ENCODE measurements at regions of chr2 and their contacts with region 1.

Region 1: DNA sequence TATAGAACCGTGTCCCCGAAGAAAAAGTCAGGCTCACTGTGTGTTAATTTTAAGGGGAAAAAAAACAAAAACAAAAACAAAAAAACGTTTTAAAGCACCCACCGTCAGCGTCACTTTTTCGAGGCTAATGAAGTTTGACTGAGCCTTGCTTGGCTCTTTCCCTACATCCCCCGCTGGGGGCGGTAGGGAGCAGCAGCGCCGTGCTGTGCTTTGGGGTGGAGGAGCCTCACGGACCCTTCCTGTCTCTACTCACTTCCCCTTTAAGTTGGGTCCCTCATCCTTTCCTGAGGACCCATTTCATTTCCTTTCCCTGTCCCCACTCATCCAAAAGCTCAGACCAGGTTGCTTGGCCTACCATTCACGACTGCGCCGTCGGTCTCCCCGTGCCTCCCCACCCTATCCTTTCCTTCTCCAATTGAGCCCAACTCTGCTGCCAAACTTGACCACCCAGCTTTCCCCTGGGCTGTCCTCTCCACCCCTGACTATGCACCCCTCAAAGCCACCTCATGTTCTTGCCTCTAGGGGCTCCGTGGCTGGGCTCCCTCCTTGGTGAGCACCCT is 82.7 kb upstream of the RPL31 start:
- DNase-seq: peak in 1 of 2 experiments; percentile 86
- H3K4me3 ChIP-seq: no peak overlapping the region
- H3K27ac ChIP-seq: no peak overlapping the region
- H3K4me1 ChIP-seq: no peaks in the 10 kb centered on the region; a peak in 1 of 7 replicates
- H3K27me3 ChIP-seq: no peaks in the 10 kb centered on the region
- CTCF ChIP-seq: peak; percentile 64 to 93 (median 90)
- EP300 ChIP-seq: no peak
- POLR2A ChIP-seq: no peak
- RAD21 ChIP-seq: peak; percentile 54 to 69

Region 2: DNA sequence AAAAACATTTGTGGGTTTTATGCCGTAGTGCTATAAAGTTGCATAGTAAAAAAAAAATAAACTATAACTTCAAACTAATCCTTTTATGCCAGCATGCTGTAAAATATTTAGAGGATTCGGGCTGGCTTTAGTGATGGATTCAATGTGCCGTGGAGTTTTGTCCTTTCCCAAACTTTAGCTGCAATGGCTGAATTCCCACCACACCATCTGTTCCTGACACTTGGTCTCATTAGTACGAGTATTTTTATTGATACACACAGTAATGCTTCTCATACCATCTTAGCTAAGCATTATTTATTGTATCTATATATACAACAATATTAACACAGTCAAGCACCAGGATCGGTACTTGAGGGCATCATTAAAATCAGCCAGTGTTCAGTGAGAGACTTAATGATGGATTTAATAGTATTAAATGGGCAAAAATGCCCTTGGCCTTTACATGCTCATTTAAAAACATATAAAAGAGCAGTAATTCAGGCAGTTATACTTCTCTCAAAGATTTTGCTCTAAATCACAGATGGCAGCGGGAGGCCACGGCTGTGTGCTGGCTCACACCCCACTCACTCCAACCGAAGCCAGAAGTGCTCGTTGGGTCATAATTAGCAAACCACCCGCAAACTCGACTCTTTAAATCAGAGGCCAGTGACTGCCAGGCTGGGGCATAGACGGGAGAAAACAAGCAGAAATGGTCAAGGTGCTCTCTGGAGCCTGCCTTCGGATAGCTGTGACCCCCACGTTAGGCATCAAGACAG is 1132.6 kb before region 1 on chr2:
- CTCF ChIA-PET with region 1: no interaction called
- POLR2A ChIA-PET with region 1: no interaction called
- DNase-seq: no peak
- H3K4me3 ChIP-seq: no peak overlapping the region
- H3K27ac ChIP-seq: no peak overlapping the region
- H3K4me1 ChIP-seq: no peaks in the 10 kb centered on the region
- H3K27me3 ChIP-seq: no peaks in the 10 kb centered on the region
- CTCF ChIP-seq: no peak
- EP300 ChIP-seq: no peak
- POLR2A ChIP-seq: no peak
- RAD21 ChIP-seq: no peak

Region 3: GRCh38 chr2:100887713-100888495 is 31.5 kb before region 1 on chr2:
- CTCF ChIA-PET with region 1: interaction called, 25 read pairs
- POLR2A ChIA-PET with region 1: no interaction called
- DNase-seq: no peak
- H3K4me3 ChIP-seq: no peak overlapping the region
- H3K27ac ChIP-seq: no peak overlapping the region
- H3K4me1 ChIP-seq: peaks cover 0 to 16% (median 11%) of the 10 kb centered on the region in 4 experiments; a peak in 5 of 7 replicates
- H3K27me3 ChIP-seq: no peaks in the 10 kb centered on the region
- CTCF ChIP-seq: no peak
- EP300 ChIP-seq: no peak
- POLR2A ChIP-seq: no peak
- RAD21 ChIP-seq: no peak

Region 4: DNA sequence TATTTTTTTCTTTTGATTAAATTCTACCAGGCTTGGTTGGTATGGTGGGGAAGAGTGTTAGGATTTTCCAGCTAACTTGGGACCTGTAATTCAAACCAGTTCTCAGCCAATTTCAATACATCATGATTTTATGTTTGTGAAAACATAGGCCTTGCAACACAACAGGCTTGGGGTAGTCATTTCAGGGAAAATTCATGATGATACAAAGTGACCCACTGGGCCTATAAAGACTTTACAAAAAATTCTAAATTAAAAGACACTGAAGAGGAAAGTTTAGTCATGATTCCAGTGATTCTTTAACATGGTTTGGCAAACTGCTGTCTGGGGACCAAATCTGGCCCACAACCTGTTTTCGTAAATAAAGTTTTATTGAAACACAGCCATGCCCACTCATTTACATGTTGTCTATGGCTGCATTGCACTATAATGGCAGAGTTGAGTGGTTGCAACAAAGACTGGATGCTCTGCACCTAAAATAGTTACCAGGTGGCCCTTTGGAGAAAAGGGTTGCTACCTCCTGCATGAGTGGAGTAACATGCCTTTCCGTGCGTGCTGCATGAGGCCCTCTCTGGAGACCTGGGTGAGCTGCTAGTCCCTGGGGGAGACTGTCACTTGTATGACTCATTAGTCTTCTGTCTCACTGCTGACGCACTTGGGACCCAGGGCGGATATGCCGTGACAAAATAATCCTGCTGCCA is 25.9 kb before region 1 on chr2:
- CTCF ChIA-PET with region 1: interaction called, 25 read pairs
- POLR2A ChIA-PET with region 1: no interaction called
- DNase-seq: no peak
- H3K4me3 ChIP-seq: no peak overlapping the region
- H3K27ac ChIP-seq: no peak overlapping the region
- H3K4me1 ChIP-seq: peaks cover 0 to 6% (median 3%) of the 10 kb centered on the region in 4 experiments; a peak in 4 of 7 replicates
- H3K27me3 ChIP-seq: no peaks in the 10 kb centered on the region
- CTCF ChIP-seq: no peak
- EP300 ChIP-seq: no peak
- POLR2A ChIP-seq: no peak
- RAD21 ChIP-seq: no peak

Region 5: GRCh38 chr2:100902833-100903405 is 16.5 kb before region 1 on chr2:
- CTCF ChIA-PET with region 1: interaction called, 50 read pairs
- POLR2A ChIA-PET with region 1: no interaction called
- DNase-seq: no peak
- H3K4me3 ChIP-seq: no peak overlapping the region
- H3K27ac ChIP-seq: no peak overlapping the region
- H3K4me1 ChIP-seq: no peaks in the 10 kb centered on the region
- H3K27me3 ChIP-seq: no peaks in the 10 kb centered on the region
- CTCF ChIP-seq: no peak
- EP300 ChIP-seq: no peak
- POLR2A ChIP-seq: no peak
- RAD21 ChIP-seq: no peak

Region 6: GRCh38 chr2:100935372-100935752 is 16.0 kb after region 1 on chr2:
- CTCF ChIA-PET with region 1: interaction called, 22 read pairs
- POLR2A ChIA-PET with region 1: no interaction called
- DNase-seq: no peak
- H3K4me3 ChIP-seq: no peak overlapping the region
- H3K27ac ChIP-seq: no peak overlapping the region
- H3K4me1 ChIP-seq: no peaks in the 10 kb centered on the region; a peak in 1 of 7 replicates
- H3K27me3 ChIP-seq: no peaks in the 10 kb centered on the region
- CTCF ChIP-seq: no peak
- EP300 ChIP-seq: no peak
- POLR2A ChIP-seq: no peak
- RAD21 ChIP-seq: no peak

Region 7: DNA sequence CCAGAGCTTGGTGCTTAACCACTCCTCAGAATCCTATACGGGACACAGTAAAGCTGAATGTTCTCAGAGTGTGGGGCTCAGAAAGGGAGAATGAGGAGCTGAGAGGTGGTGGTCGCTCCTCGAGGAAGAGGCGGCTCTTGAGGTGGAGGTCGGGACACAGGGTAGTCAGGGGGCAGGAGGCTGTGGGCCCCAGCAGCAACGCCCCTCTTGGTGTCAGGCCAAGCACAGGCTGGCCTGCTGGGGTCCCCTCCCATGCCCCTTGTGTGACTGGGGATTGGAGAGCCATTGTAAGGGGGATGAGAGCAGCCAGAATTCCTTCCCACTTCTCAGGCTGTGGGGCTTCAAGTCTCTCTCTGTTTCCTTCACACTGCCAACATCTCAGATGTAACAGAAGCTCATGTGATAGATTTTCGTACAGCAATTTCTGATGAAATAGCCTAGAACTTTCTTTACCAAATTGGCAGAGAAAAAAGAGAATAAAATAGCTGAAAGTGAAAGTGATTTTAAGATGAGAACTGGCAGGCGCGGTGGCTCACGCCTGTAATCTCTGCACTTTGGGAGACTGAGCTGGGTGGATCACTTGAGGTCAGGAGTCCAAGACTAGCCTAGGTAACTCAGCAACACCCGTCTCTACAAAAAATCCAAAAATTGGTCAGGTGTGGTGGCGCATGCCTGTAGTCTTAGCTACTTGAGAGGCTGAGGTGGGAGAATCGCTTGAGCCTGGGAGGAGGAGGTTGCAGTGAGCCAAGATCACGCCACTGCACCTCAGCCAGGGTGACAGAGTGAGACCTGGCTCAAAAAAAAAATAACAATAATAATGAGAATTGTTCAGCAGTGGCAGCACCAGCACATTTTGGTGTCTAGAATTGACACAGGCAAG is 21.6 kb after region 1 on chr2:
- CTCF ChIA-PET with region 1: interaction called, 22 read pairs
- POLR2A ChIA-PET with region 1: no interaction called
- DNase-seq: no peak
- H3K4me3 ChIP-seq: no peak overlapping the region
- H3K27ac ChIP-seq: no peak overlapping the region
- H3K4me1 ChIP-seq: no peaks in the 10 kb centered on the region
- H3K27me3 ChIP-seq: no peaks in the 10 kb centered on the region
- CTCF ChIP-seq: no peak
- EP300 ChIP-seq: no peak
- POLR2A ChIP-seq: no peak
- RAD21 ChIP-seq: no peak

Measured in H1 (cell line).